CD8-positive, alpha-beta T cell (primary cell): ENCODE measurements at regions of chr5 and their contacts with region 1.

Region 1: GRCh38 chr5:143403593-143404415 is at the start of gene NR3C1:
- DNase-seq: peak; percentile 77 to 96 (median 88)
- ATAC-seq: peak; percentile 67
- H3K4me3 ChIP-seq: peak within 1 kb of the TSS; percentile 74 to 94
- H3K4me3 Mint-ChIP-seq: peak within 1 kb of the TSS; percentile 95
- H3K27ac ChIP-seq: peak within 1 kb of the TSS; percentile 83 to 93
- H3K27ac Mint-ChIP-seq: peak within 1 kb of the TSS; percentile 97
- H3K4me1 ChIP-seq: peaks cover 35% of the 10 kb centered on the region
- H3K4me1 Mint-ChIP-seq: peaks cover 39% of the 10 kb centered on the region
- H3K27me3 ChIP-seq: no peaks in the 10 kb centered on the region
- H3K27me3 Mint-ChIP-seq: no peaks in the 10 kb centered on the region
- CTCF ChIP-seq: peak; percentile 65
- total RNA-seq, gene NR3C1: 179 to 181 TPM

Region 2: GRCh38 chr5:142922223-142922952 is 481.4 kb before region 1 on chr5:
- CTCF ChIA-PET with region 1: no interaction called
- POLR2A ChIA-PET with region 1: no interaction called
- intact Hi-C with region 1: loop called in 1 of 2 experiments (anchors 5 kb)
- DNase-seq: peak in 2 of 9 experiments; percentile 50 to 67
- ATAC-seq: no peak
- H3K4me3 ChIP-seq: no peak overlapping the region
- H3K4me3 Mint-ChIP-seq: no peak overlapping the region
- H3K27ac ChIP-seq: peak overlapping the region in 1 of 2 experiments; percentile 21
- H3K27ac Mint-ChIP-seq: peak overlapping the region; percentile 37
- H3K4me1 ChIP-seq: peaks cover 7% of the 10 kb centered on the region
- H3K4me1 Mint-ChIP-seq: peaks cover 34% of the 10 kb centered on the region
- H3K27me3 ChIP-seq: no peaks in the 10 kb centered on the region
- H3K27me3 Mint-ChIP-seq: no peaks in the 10 kb centered on the region
- CTCF ChIP-seq: no peak

Region 3: DNA sequence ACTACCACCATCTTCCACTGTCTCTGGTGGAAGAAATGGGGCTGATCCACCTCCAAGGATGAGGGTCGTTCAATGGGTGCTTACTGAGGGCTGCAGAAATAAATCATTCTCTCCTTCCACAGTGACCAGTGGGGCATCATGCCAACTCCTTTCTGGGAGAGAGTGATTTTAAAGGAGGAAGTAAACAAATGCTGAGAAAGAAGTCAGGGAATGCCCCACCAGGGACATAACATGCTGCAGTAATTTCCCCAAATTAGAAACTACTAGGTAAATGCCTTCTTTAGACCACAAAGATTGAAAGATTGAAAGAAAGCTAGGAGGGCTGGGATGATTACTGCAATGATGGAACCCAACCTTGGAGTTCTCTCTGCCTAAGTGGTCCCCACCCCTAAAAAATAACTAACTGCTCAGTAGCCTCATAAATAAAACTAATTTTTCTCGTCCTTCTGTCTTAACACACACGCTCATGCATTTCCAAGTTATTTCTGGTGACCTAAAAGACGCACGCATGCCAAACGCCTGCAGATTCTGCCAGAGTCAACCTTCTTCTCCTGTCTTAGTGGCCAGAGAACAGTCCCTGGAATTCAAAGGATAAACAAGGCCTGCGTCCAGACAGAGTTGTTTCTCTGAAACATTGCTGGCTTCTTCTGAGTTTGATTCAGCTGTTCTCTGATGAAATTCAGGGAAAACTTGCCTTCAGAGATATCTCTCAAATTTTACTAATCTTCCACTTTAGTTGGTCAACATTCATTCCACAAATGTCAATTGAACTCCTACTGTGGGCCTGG is 250.3 kb before region 1 on chr5:
- CTCF ChIA-PET with region 1: no interaction called
- POLR2A ChIA-PET with region 1: no interaction called
- intact Hi-C with region 1: loop called in 1 of 2 experiments (anchors 10 kb)
- DNase-seq: no peak
- ATAC-seq: no peak
- H3K4me3 ChIP-seq: no peak overlapping the region
- H3K4me3 Mint-ChIP-seq: no peak overlapping the region
- H3K27ac ChIP-seq: no peak overlapping the region
- H3K27ac Mint-ChIP-seq: no peak overlapping the region
- H3K4me1 ChIP-seq: no peaks in the 10 kb centered on the region
- H3K4me1 Mint-ChIP-seq: no peaks in the 10 kb centered on the region
- H3K27me3 ChIP-seq: no peaks in the 10 kb centered on the region
- H3K27me3 Mint-ChIP-seq: no peaks in the 10 kb centered on the region
- CTCF ChIP-seq: no peak

Region 4: DNA sequence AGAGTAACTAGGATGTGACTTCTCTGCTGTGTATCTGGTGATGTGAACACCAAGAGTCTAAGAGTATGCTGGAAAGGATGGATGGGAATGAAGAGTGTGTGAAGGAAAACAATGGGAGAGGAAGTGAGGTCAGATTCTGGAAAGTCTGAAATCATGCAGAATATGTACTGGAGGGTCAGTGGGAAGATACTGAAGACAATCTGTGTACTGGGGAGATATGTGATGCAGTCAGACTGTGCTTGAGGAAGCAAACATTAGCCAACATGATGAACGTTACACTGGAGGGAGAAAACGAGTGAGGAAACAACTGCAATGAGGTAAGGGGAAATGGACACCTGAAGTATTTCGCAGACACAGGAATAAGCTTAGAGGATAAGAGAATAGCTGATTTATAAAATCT is 106.0 kb before region 1 on chr5:
- CTCF ChIA-PET with region 1: no interaction called
- POLR2A ChIA-PET with region 1: no interaction called
- intact Hi-C with region 1: loop called (anchors 5 kb)
- DNase-seq: no peak
- ATAC-seq: no peak
- H3K4me3 ChIP-seq: no peak overlapping the region
- H3K4me3 Mint-ChIP-seq: no peak overlapping the region
- H3K27ac ChIP-seq: no peak overlapping the region
- H3K27ac Mint-ChIP-seq: peak overlapping the region; percentile 15
- H3K4me1 ChIP-seq: no peaks in the 10 kb centered on the region
- H3K4me1 Mint-ChIP-seq: peaks cover 4% of the 10 kb centered on the region
- H3K27me3 ChIP-seq: no peaks in the 10 kb centered on the region
- H3K27me3 Mint-ChIP-seq: no peaks in the 10 kb centered on the region
- CTCF ChIP-seq: no peak

Region 5: GRCh38 chr5:143413958-143414669 is 10.3 kb after region 1 on chr5:
- CTCF ChIA-PET with region 1: interaction called, 16 read pairs
- POLR2A ChIA-PET with region 1: interaction called, 4 read pairs
- intact Hi-C with region 1: no loop called
- DNase-seq: no peak
- ATAC-seq: no peak
- H3K4me3 ChIP-seq: no peak overlapping the region
- H3K4me3 Mint-ChIP-seq: no peak overlapping the region
- H3K27ac ChIP-seq: no peak overlapping the region
- H3K27ac Mint-ChIP-seq: peak overlapping the region; percentile 9
- H3K4me1 ChIP-seq: no peaks in the 10 kb centered on the region
- H3K4me1 Mint-ChIP-seq: peaks cover 15% of the 10 kb centered on the region
- H3K27me3 ChIP-seq: no peaks in the 10 kb centered on the region
- H3K27me3 Mint-ChIP-seq: no peaks in the 10 kb centered on the region
- CTCF ChIP-seq: no peak

Region 6: DNA sequence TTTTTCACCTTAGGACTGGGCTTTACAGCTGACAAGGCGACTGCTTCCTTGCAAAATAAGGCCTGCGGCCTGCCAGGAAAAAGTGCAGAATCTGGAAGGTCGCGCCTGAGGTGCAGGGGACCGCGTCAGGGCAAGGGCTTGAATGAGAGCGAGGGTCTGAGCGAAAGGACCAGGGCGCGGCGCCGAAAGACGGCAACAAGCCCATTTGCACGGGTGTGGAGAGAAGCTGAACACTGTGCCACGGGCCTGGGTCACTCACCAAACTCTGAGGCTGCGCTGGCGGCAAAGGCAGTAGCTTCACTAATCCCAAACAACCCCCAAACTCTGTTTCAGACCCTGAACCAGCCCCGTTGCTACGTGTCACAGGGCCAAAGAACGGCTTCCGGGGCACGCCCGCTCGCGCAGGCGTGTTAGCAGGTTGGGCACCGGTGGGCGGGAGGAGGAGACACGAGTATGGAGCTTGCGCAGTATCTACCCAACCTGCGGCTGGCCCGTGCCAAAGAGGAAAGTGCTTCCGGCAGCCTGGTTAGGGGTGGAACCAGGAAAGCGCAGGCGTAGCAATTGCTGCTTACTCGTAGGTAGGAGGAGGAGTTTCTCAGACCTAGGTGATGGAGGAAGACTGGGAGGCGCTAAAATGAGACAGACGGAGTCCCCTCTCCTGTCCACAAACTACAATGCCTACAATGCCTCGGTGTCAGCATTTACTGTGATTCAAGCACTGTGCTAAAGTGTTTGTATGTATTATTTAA is 766.6 kb after region 1 on chr5 and contains the starts of genes KCTD16 and YIPF5:
- CTCF ChIA-PET with region 1: no interaction called
- POLR2A ChIA-PET with region 1: interaction called, 12 read pairs
- intact Hi-C with region 1: loop called (anchors 1 kb)
- DNase-seq: peak; percentile 94 to 99 (median 96)
- ATAC-seq: peak; percentile 96
- H3K4me3 ChIP-seq: peak within 1 kb of the TSS; percentile 81 to 94
- H3K4me3 Mint-ChIP-seq: peak within 1 kb of the TSS; percentile 89
- H3K27ac ChIP-seq: peak within 1 kb of the TSS; percentile 92 to 94
- H3K27ac Mint-ChIP-seq: peak within 1 kb of the TSS; percentile 96
- H3K4me1 ChIP-seq: peaks cover 21% of the 10 kb centered on the region
- H3K4me1 Mint-ChIP-seq: peaks cover 51% of the 10 kb centered on the region
- H3K27me3 ChIP-seq: no peaks in the 10 kb centered on the region
- H3K27me3 Mint-ChIP-seq: no peaks in the 10 kb centered on the region
- CTCF ChIP-seq: no peak
- total RNA-seq, gene KCTD16: not detected
- total RNA-seq, gene YIPF5: 62.8 to 64.6 TPM